Endothelial cell of umbilical vein (primary cell): ENCODE measurements at regions of chr12 and their contacts with region 1.

Region 1: DNA sequence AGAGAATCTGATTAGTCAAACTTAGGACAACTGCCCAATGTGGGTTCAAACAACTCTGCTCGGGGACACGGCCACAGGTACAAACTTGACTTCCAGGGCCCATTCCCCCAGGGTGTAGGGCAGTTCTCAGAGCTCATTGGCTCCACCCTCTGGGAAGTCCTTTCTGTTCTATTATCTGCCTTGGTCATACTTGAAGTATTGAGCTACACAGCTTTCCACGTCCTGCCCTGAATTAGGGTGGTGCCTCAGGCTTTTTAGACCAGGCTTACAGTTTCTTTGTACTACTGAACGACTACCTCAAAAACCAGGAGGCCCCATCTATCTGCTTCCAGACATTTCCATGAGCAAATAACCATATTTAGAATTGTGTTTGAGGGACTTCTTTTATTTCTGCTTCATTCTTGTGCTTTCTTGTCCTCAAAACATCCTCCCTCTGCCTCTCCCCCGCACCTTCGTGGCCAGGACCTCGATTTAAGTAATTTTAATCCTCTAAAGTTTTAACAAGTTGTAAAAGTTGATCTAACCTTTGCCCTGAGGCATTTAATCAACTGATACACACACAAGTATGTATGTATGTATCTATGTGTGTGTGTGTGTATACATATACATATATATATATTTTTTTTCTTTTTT is 281.7 kb upstream of the AMIGO2 start:
- DNase-seq: no peak
- H3K4me3 ChIP-seq: no peak overlapping the region
- H3K27ac ChIP-seq: peak overlapping the region; percentile 67
- H3K4me1 ChIP-seq: peaks cover 20% of the 10 kb centered on the region
- H3K27me3 ChIP-seq: no peaks in the 10 kb centered on the region
- CTCF ChIP-seq: no peak
- POLR2A ChIP-seq: no peak

Region 2: DNA sequence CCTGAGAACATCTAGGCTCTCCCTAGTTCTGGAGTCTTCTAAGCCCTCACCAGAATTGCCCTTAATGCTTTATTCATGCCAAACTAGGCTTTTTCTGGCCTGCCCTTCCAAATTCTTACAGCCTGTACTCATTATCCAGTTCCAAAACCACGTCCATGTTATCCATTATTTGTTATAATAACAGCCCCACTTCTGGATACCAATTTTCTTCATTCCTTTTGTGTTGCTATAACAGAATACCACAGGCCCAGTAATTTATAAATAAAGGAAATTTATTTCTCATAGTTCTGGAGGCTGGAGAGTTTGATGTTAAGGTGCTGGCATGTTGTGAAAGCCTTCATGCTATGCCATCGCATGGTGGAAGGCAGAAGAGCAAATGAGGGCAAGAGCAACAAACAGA is 213.8 kb before region 1 on chr12:
- CTCF ChIA-PET with region 1: no interaction called
- POLR2A ChIA-PET with region 1: no interaction called
- dilution Hi-C with region 1: no loop called
- intact Hi-C with region 1: no loop called
- DNase-seq: no peak
- H3K4me3 ChIP-seq: no peak overlapping the region
- H3K27ac ChIP-seq: no peak overlapping the region
- H3K4me1 ChIP-seq: no peaks in the 10 kb centered on the region
- H3K27me3 ChIP-seq: no peaks in the 10 kb centered on the region
- CTCF ChIP-seq: no peak
- POLR2A ChIP-seq: no peak

Region 3: DNA sequence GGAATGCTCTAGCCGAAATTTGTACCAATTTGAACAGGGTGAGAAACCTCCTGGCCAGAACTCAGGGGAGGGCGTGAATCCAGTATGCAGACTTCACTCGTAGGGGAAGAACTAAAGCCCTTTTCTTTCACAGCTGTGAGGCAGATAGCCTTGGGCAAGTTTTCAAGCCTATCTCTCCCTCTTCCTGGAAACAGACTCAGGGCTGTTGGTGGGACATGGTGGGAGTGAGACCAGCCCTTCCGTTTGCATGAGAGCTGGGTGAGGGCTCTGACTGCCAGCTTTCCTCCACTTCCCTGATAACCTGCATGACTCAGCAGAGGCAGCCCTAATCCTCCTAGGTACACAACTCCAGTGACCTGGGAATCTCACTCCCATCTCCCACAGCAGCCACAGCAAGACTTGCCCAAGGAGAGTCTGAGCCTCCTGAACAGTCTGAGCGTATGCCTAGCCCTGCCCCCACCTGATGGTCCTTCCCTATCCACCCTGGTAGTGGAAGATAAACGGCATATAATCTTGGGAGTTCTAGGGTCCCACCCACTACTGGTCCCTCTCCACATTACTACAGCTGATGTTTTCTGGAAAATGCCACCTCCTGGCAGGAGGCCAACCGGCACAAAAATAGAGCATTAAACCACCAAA is 111.7 kb before region 1 on chr12:
- CTCF ChIA-PET with region 1: no interaction called
- POLR2A ChIA-PET with region 1: no interaction called
- dilution Hi-C with region 1: no loop called
- intact Hi-C with region 1: no loop called
- DNase-seq: no peak
- H3K4me3 ChIP-seq: no peak overlapping the region
- H3K27ac ChIP-seq: no peak overlapping the region
- H3K4me1 ChIP-seq: peaks cover 7% of the 10 kb centered on the region
- H3K27me3 ChIP-seq: no peaks in the 10 kb centered on the region
- CTCF ChIP-seq: no peak
- POLR2A ChIP-seq: no peak

Region 4: DNA sequence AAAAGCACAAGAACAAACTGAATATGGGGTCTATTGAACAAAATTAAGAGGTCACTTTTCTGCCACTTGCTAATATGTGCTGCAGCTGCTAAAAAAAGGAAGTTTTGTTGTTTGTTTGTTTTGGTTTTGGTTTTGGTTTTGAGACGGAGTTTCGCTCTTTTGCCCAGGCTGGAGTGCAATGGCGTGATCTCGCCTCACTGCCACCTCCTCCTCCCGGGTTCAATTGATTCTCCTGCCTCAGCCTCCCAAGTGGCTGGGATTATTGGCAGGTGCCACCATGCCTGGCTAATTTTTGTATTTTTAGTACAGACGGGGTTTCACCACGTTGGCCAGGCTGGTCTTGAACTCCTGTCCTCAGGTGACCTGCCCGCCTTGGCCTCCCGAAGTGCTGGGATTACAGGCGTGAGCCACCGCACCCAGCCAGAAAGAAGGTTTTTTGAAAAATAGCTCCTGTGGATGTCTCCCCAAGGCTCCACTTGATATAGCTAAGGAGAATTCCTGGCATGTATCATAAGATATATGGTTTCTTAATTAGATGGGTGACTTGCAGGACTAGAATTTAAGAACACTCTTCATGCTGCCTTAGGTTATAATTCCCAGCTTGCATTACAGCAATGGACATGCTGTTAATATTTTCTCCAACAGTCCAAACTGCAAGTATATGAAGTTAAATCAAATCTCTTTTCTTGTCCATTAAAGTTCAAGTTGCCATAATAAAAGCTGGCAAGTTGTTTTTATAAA is 44.2 kb before region 1 on chr12:
- CTCF ChIA-PET with region 1: interaction called, 3 read pairs
- POLR2A ChIA-PET with region 1: no interaction called
- dilution Hi-C with region 1: no loop called
- intact Hi-C with region 1: loop called (anchors 1 kb)
- DNase-seq: no peak
- H3K4me3 ChIP-seq: no peak overlapping the region
- H3K27ac ChIP-seq: no peak overlapping the region
- H3K4me1 ChIP-seq: peaks cover 20% of the 10 kb centered on the region
- H3K27me3 ChIP-seq: no peaks in the 10 kb centered on the region
- CTCF ChIP-seq: no peak
- POLR2A ChIP-seq: no peak

Region 5: DNA sequence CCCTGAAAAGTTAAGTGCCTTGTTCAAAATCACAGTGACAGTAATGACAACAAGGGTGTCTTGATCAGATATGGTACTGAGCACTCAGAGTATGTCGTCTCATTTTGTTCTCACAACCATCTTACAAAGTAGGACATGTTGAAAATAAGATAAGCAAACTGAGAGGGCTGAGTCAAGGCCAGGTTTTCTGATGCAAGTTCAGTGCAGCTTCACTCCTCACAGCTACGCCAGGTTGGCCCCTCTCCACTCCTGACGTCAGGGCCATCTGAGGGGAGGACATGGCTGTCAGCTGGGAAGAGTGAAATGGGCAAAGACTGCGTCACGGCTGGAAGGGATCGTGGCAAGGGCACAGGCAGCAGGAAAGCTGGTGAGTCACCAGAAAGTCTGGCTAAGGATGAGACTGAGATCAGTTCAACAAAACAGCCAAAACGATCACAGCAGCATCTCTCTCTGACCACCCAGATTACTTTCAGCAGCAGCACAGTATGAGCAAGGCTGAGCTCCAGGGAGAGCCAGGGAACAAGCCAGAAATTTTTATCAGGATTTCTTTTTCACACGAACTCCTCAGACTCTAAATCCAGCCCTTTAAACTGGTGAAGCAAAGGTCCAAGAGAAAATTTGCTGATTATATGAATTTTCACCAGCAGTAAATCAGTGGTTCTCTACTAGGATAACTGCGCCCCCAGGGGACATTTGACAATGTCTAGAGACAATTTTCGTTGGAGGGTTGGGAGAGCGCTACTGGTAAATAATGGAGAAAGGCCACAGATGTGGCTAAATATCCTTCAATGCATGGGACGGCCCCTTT is 16.1 kb after region 1 on chr12:
- CTCF ChIA-PET with region 1: no interaction called
- POLR2A ChIA-PET with region 1: no interaction called
- dilution Hi-C with region 1: no loop called
- intact Hi-C with region 1: loop called (anchors 2 kb)
- DNase-seq: peak; percentile 97
- H3K4me3 ChIP-seq: no peak overlapping the region
- H3K27ac ChIP-seq: peak overlapping the region; percentile 63
- H3K4me1 ChIP-seq: peaks cover 26% of the 10 kb centered on the region
- H3K27me3 ChIP-seq: no peaks in the 10 kb centered on the region
- CTCF ChIP-seq: no peak
- POLR2A ChIP-seq: no peak